Endothelial cell of umbilical vein (primary cell): ENCODE measurements at regions of chr2 and their contacts with region 1.

Region 1: DNA sequence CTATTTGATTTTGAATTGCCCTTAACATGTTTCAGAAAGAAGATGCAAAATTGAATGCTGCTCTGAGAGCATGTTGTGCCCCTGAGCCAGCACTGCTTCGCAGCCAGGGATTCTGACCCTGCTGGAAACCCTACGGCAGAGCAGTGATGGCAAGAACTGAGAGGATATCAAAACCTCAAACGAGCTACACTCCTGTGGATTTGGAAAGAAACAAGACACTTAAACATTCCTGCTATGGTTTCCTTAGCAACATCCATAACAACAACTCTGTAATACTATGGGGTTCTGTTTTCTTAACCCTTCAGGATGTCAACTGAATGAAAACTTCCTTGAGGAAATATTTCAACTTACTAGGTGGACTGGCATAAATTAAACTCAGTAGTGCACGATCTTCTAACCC is 649.1 kb downstream of the NYAP2 start:
- DNase-seq: peak; percentile 31
- H3K4me3 ChIP-seq: no peak overlapping the region
- H3K27ac ChIP-seq: no peak overlapping the region
- H3K4me1 ChIP-seq: no peaks in the 10 kb centered on the region
- H3K27me3 ChIP-seq: no peaks in the 10 kb centered on the region
- CTCF ChIP-seq: no peak
- POLR2A ChIP-seq: no peak

Region 2: GRCh38 chr2:226118471-226119430 is 70.1 kb after region 1 on chr2:
- CTCF ChIA-PET with region 1: no interaction called
- POLR2A ChIA-PET with region 1: no interaction called
- dilution Hi-C with region 1: no loop called
- intact Hi-C with region 1: loop called (anchors 2 kb)
- DNase-seq: no peak
- H3K4me3 ChIP-seq: no peak overlapping the region
- H3K27ac ChIP-seq: no peak overlapping the region
- H3K4me1 ChIP-seq: peaks cover 5% of the 10 kb centered on the region
- H3K27me3 ChIP-seq: no peaks in the 10 kb centered on the region
- CTCF ChIP-seq: no peak
- POLR2A ChIP-seq: no peak

Region 3: DNA sequence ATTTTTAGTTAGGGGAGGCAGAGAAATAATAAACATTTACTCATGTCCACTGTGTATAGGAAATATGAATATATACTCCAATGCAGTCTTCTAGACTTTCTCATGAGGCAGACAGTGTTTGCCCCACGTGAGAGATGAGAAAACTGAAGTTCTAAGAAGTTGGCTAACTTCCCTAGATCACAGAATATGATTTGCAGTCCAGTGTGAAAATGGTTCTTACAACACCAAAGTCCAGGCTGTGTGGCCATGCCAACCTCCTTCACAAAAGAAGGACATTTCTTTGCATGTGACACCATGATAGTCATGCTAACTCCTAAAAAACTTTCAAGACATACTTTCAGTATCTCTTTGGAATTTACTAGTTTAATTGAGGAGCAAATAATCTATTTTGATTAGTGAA is 607.3 kb after region 1 on chr2:
- CTCF ChIA-PET with region 1: no interaction called
- POLR2A ChIA-PET with region 1: no interaction called
- dilution Hi-C with region 1: no loop called
- intact Hi-C with region 1: loop called (anchors 5 kb)
- DNase-seq: no peak
- H3K4me3 ChIP-seq: no peak overlapping the region
- H3K27ac ChIP-seq: no peak overlapping the region
- H3K4me1 ChIP-seq: no peaks in the 10 kb centered on the region
- H3K27me3 ChIP-seq: peaks cover 22 to 32% of the 10 kb centered on the region in 2 experiments
- CTCF ChIP-seq: no peak
- POLR2A ChIP-seq: no peak